ENCODE measurements at regions of chr14 and their contacts with region 1.

Region 1: DNA sequence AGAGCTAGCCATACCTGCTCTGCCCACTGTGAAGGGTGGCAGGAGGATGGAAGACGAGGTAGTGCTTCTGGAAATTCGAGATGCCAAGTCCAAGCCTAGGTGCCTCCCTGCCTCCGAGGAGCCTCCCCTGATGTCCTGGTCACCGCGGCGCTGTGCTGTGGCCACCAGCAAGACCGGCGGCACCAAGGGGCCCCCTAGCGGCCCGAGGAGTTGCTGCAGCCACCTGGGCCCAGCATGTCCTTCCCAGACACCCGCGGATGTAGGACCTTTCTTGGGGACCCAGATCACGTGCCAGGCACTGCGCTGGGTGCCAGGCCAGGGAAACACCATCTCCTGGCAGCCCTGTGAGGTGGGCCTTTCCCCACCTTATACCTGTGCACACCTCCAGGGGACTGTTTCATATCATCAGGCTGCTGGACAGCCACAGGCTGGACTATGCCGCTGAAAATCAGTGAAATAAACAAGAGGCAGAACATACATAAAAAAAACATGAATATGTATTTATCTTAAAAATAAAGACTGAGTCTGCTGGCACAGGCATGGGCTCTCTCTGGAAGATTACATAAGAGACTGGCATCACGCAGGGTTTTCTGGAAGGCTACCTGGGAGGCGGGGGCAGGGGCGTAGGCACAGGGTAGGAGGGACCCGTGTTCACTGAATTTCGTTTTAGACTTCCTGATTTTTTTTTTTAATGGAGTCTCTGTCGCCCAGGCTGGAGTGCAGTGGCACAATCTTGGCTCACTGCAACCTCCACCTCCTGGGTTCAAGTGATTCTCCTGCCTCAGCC is 15.9 kb upstream of the HHIPL1 start:
- DNase-seq: peak; percentile 53 to 91 (median 81)

Region 2: DNA sequence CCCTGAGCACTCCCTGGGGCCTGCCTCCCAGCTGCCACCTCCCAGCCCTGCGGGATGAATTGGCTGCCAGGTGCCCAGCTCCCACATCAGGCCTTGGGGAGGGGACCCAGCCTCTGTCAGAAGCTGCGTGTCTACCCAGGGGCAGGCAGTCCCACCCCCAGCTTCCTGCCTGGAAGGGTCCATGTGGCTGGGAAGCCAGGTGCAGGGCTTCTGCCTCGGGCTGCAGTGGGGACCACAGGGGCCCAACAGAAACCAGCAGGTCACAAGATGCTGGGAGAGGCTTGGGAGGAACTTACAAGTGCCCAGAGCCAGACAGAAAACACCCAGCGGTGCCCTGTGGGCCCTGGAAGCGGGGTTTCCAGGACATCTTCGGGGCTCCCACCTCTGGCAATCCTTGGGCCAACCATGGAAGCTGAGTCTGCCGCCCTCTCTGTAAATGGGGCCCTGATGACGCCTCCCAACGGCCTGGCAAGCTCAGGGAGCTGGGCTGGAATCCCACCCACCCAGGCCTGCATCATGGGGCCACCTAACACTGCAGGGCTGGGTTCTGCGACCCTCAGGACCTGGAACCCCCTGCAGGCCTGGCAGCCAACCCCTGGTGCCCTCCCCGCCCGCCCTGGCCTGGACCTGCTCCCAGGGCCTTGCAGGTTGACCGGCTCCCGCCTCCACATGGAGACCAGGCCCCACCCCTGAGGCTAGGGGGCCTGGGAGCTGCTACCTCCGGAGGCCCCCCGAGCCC is 111.2 kb before region 1 on chr14:
- intact Hi-C with region 1: loop called (anchors 2 kb)
- DNase-seq: peak in 10 of 42 donors; percentile 1 to 29 (median 11)

Measured in head of caudate nucleus (tissue), 42 donors.